Heart left ventricle (tissue), 16 donors: ENCODE measurements at regions of chr10 and their contacts with region 1.

Region 1: GRCh38 chr10:95561182-95562075 is at the start of gene SORBS1:
- DNase-seq: peak; percentile 97 to 98 (median 97)
- ATAC-seq: peak; percentile 97 to 99 (median 98)
- H3K4me3 ChIP-seq: peak within 1 kb of the TSS; percentile 82 to 99 (median 94)
- H3K27ac ChIP-seq: peak within 1 kb of the TSS; percentile 81 to 96 (median 90)
- H3K4me1 ChIP-seq: peaks cover 0 to 49% (median 25%) of the 10 kb centered on the region in 12 donors
- H3K27me3 ChIP-seq: no peaks in the 10 kb centered on the region
- CTCF ChIP-seq: peak in 1 of 12 donors; percentile 8
- POLR2A ChIP-seq: peak; percentile 99 to 100
- total RNA-seq, gene SORBS1: 380 to 1,440 (median 1,065) TPM

Region 2: GRCh38 chr10:95408983-95409873 is 152.2 kb before region 1 on chr10:
- intact Hi-C with region 1: no loop called
- DNase-seq: no peak
- ATAC-seq: no peak
- H3K4me3 ChIP-seq: peak overlapping the region in 2 of 12 donors; percentile 19
- H3K27ac ChIP-seq: peak overlapping the region; percentile 63 to 98 (median 90)
- H3K4me1 ChIP-seq: peaks cover 20 to 90% (median 62%) of the 10 kb centered on the region in 12 donors
- H3K27me3 ChIP-seq: no peaks in the 10 kb centered on the region
- CTCF ChIP-seq: no peak
- POLR2A ChIP-seq: no peak

Region 3: GRCh38 chr10:95423164-95424005 is 138.0 kb before region 1 on chr10:
- intact Hi-C with region 1: loop called in 2 of 10 experiments (anchors 5 to 10 kb)
- DNase-seq: no peak
- ATAC-seq: peak in 3 of 4 donors; percentile 25 to 39 (median 30)
- H3K4me3 ChIP-seq: no peak overlapping the region
- H3K27ac ChIP-seq: peak overlapping the region; percentile 6 to 98 (median 61)
- H3K4me1 ChIP-seq: peaks cover 0 to 79% (median 46%) of the 10 kb centered on the region in 12 donors
- H3K27me3 ChIP-seq: no peaks in the 10 kb centered on the region
- CTCF ChIP-seq: no peak
- POLR2A ChIP-seq: no peak

Region 4: GRCh38 chr10:95445837-95446486 is 115.5 kb before region 1 on chr10:
- intact Hi-C with region 1: loop called in 3 of 10 experiments (anchors 2 to 5 kb)
- DNase-seq: peak in 4 of 5 donors; percentile 53 to 66 (median 60)
- ATAC-seq: peak; percentile 40 to 58 (median 56)
- H3K4me3 ChIP-seq: no peak overlapping the region
- H3K27ac ChIP-seq: peak overlapping the region; percentile 70 to 94 (median 86)
- H3K4me1 ChIP-seq: peaks cover 3 to 96% (median 64%) of the 10 kb centered on the region in 12 donors
- H3K27me3 ChIP-seq: no peaks in the 10 kb centered on the region
- CTCF ChIP-seq: peak; percentile 61 to 83 (median 76)
- POLR2A ChIP-seq: no peak

Region 5: GRCh38 chr10:95480102-95480900 is 81.1 kb before region 1 on chr10:
- intact Hi-C with region 1: loop called in 4 of 10 experiments (anchors 2 to 10 kb)
- DNase-seq: peak in 4 of 5 donors; percentile 61 to 74 (median 68)
- ATAC-seq: peak; percentile 35 to 71 (median 58)
- H3K4me3 ChIP-seq: peak overlapping the region in 7 of 12 donors; percentile 2 to 32 (median 10)
- H3K27ac ChIP-seq: peak overlapping the region; percentile 84 to 96 (median 91)
- H3K4me1 ChIP-seq: peaks cover 18 to 82% (median 72%) of the 10 kb centered on the region in 12 donors
- H3K27me3 ChIP-seq: no peaks in the 10 kb centered on the region
- CTCF ChIP-seq: peak in 4 of 12 donors; percentile 15 to 22 (median 20)
- POLR2A ChIP-seq: no peak

Region 6: GRCh38 chr10:95513941-95514392 is 47.5 kb before region 1 on chr10:
- intact Hi-C with region 1: loop called in 4 of 10 experiments (anchors 2 to 10 kb)
- DNase-seq: peak in 4 of 5 donors; percentile 44 to 72 (median 53)
- ATAC-seq: peak; percentile 42 to 77 (median 70)
- H3K4me3 ChIP-seq: no peak overlapping the region
- H3K27ac ChIP-seq: peak overlapping the region; percentile 53 to 91 (median 75)
- H3K4me1 ChIP-seq: peaks cover 16 to 99% (median 74%) of the 10 kb centered on the region in 12 donors
- H3K27me3 ChIP-seq: no peaks in the 10 kb centered on the region
- CTCF ChIP-seq: no peak
- POLR2A ChIP-seq: no peak

Region 7: DNA sequence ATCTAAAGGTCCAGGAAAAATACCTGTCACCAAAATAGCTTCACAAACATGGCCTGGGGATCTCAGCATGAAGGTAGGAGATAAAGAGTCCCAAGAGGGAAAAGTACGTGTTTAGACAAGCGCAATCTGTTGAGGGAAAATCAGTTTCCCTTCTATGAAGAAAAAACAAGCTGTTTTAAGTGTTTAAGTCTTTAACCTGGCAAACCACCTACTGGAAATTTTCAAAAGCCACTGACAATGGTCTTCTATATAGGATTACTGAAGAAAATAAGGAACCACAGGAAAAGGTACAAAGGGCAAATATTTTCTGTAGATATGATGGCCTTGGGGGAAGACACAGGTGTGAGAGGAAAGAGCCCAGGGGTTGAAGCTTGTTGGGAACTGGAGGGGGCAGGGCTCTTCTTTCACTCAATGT is 73.9 kb after region 1 on chr10:
- intact Hi-C with region 1: no loop called
- DNase-seq: no peak
- ATAC-seq: no peak
- H3K4me3 ChIP-seq: no peak overlapping the region
- H3K27ac ChIP-seq: no peak overlapping the region
- H3K4me1 ChIP-seq: no peaks in the 10 kb centered on the region
- H3K27me3 ChIP-seq: no peaks in the 10 kb centered on the region
- CTCF ChIP-seq: no peak
- POLR2A ChIP-seq: no peak